Activated T-helper 2 cell treated with anti-CD3 and anti-CD28 coated beads, Interferon-gamma antibody, Interleukin-2, Interleukin-4, amounts not matched to agents 10 μg/mL and 5 μg/mL and 100 μg/mL, durations not matched to agents 14 hours and 24 hours and 36 hours (primary cell): ENCODE measurements at regions of chr2 and their contacts with region 1.

Region 1: DNA sequence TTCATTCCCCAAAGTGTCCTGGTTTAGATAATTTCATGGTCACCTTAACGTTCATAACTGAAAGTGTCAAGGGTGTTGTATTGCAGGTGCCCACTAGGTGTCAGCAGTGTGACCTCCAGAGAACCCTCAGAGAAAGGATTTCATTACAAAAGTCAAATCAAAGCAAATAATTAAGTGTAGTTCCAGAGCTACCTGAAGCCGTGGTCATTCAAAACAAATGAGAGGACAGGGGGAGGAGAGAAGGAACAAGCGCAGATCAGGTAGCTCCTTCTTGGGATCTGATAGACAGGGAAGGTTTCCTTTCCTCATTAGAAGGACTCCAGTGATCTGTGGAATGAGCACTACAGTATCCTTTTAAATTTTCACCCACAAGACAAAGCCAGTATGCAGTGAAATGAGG is at the start of gene SLC9A4:
- DNase-seq: peak; percentile 13
- H3K4me3 Mint-ChIP-seq: no peak within 1 kb of the TSS
- H3K27ac Mint-ChIP-seq: no peak within 1 kb of the TSS
- H3K4me1 Mint-ChIP-seq: no peaks in the 10 kb centered on the region
- H3K27me3 Mint-ChIP-seq: peaks cover 50% of the 10 kb centered on the region
- total RNA-seq, gene SLC9A4: 0.09 TPM in 2 replicates

Region 2: DNA sequence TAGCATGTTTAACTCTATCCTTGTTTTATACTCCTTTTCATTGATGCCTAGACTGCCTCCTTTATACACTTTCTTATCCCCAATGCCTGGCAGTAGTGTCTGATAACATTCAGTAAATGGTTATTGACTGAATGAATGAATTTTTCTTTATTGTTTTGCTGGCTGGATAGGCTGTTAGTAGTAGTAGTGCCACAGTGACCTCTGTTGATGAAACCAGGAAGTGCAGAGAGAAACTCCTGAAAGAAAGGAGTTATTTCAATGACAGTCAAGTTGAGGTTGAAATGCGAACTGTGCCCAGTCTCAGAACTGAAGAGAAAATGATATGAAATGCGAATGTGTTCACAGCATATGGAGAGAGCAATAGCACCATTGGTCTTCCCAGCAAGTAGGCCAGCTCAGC is 119.6 kb after region 1 on chr2:
- intact Hi-C with region 1: loop called (anchors 1 kb)
- DNase-seq: no peak
- H3K4me3 Mint-ChIP-seq: no peak overlapping the region
- H3K27ac Mint-ChIP-seq: no peak overlapping the region
- H3K4me1 Mint-ChIP-seq: no peaks in the 10 kb centered on the region
- H3K27me3 Mint-ChIP-seq: peaks cover 7% of the 10 kb centered on the region

Region 3: GRCh38 chr2:102703748-102704147 is 230.7 kb after region 1 on chr2:
- intact Hi-C with region 1: loop called (anchors 5 kb)
- DNase-seq: no peak
- H3K4me3 Mint-ChIP-seq: no peak overlapping the region
- H3K27ac Mint-ChIP-seq: no peak overlapping the region
- H3K4me1 Mint-ChIP-seq: no peaks in the 10 kb centered on the region
- H3K27me3 Mint-ChIP-seq: peaks cover 6% of the 10 kb centered on the region